Activated T-helper 1 cell treated with anti-CD3 and anti-CD28 coated beads, Interleukin-12 subunit alpha, Interleukin-12 subunit beta, Interleukin-2, Interleukin-4 antibody, amounts not matched to agents 30 ng/mL and 10 ng/mL and 1 ng/mL, durations not matched to agents 14 hours and 24 hours and 36 hours (primary cell): ENCODE measurements at regions of chr15 and their contacts with region 1.

Region 1: GRCh38 chr15:74768771-74769342 is 13.0 kb upstream of the CSK start:
- DNase-seq: no peak
- H3K4me3 Mint-ChIP-seq: no peak overlapping the region
- H3K27ac Mint-ChIP-seq: no peak overlapping the region
- H3K4me1 Mint-ChIP-seq: peaks cover 34% of the 10 kb centered on the region
- H3K27me3 Mint-ChIP-seq: peaks cover 11% of the 10 kb centered on the region

Region 2: DNA sequence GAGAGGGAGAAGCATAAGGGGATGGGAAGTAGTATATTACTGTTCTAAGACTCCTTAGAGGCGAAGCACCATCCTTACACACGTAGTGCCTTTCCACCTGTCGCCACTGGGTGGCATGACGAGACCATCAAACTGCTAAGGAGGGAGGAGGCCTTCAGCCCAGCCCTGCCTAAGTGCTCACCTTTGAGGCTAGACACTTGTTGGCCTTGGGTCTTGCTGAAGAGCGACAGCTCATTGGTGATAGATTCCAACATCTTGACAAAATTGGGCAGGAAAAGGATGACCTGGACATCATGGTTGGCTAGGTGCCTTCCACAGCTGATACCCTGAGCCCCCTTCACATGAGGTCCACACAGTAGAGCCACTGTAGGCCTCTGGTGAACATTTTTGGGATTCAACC is 133.6 kb before region 1 on chr15:
- intact Hi-C with region 1: loop called (anchors 1 kb)
- DNase-seq: peak; percentile 61
- H3K4me3 Mint-ChIP-seq: no peak overlapping the region
- H3K27ac Mint-ChIP-seq: no peak overlapping the region
- H3K4me1 Mint-ChIP-seq: peaks cover 11% of the 10 kb centered on the region
- H3K27me3 Mint-ChIP-seq: no peaks in the 10 kb centered on the region

Region 3: DNA sequence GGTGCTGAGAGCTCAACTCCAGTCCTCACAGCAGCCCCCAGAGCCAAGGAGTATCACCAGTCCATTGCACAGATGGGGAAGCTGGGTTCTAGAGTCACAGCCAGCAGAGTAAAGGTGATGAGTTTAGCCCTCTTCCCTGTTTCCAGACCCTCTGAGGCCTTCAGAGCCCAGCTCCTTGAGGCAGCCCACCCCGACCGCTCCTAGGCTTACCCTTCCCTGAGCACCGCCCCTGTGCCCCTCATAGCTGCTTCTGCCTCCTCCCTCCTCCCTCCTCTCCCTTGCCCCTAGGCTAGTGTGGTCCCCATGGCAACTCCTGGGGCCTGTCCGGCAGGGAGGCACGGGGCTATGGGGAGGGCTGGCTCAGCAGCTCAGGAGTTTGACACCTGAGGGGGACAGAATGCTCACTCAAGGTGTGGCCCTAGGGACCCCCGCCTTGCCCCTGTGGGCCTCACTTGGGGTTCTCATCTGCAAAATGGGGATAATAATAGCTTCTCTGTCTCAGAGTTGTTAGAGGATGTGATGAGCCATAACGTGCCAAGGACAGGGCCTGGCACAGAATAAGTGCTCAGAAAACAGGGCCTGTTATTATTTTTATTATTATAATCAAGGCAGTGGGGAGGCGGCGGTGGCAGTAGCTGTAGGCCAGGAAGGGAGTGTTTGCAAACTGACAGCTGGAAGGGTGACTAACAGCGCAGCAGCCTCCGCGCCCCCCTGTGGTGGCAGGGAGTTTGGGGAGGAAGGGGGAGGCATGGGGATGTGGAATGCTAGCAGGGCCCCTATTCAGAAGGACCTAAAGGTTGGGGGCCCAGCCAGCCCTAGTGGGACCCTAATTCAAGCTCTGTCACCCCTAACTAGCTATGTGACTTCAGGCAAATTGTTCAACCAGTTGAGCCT is 24.5 kb after region 1 on chr15:
- intact Hi-C with region 1: loop called (anchors 1 kb)
- DNase-seq: no peak
- H3K4me3 Mint-ChIP-seq: peak overlapping the region; percentile 42
- H3K27ac Mint-ChIP-seq: peak overlapping the region; percentile 74
- H3K4me1 Mint-ChIP-seq: peaks cover 75% of the 10 kb centered on the region
- H3K27me3 Mint-ChIP-seq: no peaks in the 10 kb centered on the region

Region 4: DNA sequence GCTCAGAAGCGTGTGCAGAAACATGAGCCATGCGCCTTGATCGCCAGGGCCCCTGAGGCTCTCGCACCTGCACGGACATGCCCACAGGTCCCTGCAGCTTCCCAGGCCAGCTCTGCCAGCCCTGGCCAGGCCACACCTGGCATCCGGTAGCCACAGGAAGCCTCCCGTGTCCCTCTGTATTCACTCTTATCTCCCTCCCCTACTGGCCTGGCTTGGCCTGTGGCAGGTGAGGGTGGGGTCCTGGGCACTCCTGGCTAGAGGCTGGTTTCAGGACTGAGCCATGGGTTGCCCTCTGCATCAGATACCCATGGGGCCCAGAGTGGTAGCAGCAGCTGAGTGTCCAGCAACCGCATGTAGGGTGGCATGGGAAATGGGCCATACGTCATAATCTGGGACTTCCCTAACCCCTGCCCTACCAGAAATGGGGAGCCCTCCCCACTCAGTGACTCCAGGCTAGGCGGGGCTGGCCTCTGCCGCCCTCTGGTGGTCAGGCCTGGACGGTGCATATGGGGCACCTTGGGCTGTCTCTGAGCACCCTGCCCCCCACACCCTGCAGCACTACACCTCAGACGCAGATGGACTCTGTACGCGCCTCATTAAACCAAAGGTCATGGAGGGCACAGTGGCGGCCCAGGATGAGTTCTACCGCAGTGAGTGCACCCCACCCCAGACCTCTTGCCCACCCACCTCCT is 31.1 kb after region 1 on chr15:
- intact Hi-C with region 1: loop called (anchors 1 kb)
- DNase-seq: peak; percentile 82
- H3K4me3 Mint-ChIP-seq: peak overlapping the region; percentile 45
- H3K27ac Mint-ChIP-seq: peak overlapping the region; percentile 81
- H3K4me1 Mint-ChIP-seq: peaks cover 37% of the 10 kb centered on the region
- H3K27me3 Mint-ChIP-seq: no peaks in the 10 kb centered on the region

Region 5: GRCh38 chr15:74835307-74835823 is 66.5 kb after region 1 on chr15:
- intact Hi-C with region 1: loop called (anchors 1 kb)
- DNase-seq: peak; percentile 20
- H3K4me3 Mint-ChIP-seq: no peak overlapping the region
- H3K27ac Mint-ChIP-seq: peak overlapping the region; percentile 20
- H3K4me1 Mint-ChIP-seq: peaks cover 8% of the 10 kb centered on the region
- H3K27me3 Mint-ChIP-seq: no peaks in the 10 kb centered on the region

Region 6: DNA sequence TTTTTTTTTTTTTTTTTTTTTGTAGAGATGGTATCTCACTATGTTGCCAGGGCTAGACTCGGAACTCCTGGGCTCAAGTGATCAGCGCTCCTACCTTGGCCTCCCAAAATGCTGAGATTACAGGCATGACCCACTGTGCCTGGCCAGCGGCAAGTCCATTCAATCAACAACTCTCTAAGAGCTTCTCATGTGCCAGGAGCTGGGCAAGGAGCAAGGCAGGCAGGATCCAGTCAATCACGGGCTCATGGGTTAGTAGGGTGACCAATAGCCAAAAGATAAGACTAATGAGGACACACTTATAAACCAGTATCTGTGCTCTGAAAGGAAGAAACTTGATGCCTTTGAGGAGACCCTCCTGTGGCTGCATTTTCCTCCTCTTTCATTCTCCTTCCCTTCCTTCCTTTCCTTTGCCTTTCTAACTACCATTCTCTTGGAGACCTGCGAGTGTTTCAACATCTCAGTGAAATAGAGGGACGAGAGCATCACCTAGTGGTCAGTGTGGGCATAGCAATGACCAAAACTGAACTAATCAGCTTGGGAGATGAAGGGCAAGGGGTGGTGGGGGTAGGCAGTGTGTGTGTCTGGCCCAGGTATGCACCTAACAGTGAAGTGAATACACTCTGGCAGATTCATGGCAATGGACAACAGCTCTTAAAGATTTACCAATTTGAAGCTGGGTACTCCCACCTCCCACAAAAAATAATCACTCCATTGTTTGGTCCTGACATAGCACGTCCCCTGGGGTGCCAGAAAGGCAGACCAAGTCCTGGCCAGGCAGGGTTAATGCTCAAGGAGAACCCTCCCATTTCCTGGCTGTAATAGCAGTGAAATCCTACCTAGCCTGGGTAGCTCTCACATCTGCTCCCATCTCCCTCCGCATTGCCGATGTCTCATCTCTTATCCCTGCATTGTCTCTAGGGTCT is 181.5 kb after region 1 on chr15:
- intact Hi-C with region 1: loop called (anchors 1 kb)
- DNase-seq: peak; percentile 71
- H3K4me3 Mint-ChIP-seq: no peak overlapping the region
- H3K27ac Mint-ChIP-seq: no peak overlapping the region
- H3K4me1 Mint-ChIP-seq: peaks cover 11% of the 10 kb centered on the region
- H3K27me3 Mint-ChIP-seq: peaks cover 2% of the 10 kb centered on the region